Esophagus squamous epithelium (tissue), 5 donors: ENCODE measurements at regions of chr12 and their contacts with region 1.

Region 1: DNA sequence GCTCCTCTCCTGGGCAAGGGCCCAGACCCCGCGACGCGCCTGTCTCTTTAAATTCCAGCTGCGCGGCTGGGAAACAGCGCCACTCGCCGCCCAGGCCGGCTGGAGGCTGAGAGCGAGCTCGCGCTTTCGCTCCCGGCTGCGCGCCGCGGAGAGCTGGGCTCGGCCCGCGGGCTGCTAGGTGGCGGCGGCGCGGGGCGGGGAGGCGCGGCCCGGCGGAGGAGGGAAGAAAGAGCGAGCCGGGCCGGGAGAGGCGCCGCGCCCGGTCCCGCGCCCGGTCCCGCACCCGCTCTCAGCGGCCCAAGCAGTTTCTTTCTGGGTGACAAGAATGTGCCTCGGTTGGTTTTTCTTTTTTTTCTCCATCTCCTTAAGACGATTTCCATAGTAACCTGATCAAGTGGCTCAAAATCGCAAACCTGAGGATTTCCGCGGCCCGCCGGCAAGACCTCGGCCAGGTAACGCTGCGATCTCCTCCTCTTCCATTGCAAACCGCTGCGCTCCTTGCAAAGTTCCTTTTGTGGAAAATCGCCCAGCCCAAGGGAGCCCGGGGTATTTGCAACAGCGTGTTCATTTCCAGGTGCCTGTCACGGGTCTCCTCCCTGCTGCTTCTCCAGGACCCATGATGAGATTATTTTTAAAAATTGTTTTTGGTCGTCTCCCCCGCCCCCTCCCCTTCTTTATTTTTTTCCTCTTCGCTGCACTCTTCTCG is 259.5 kb upstream of the E2F7 start:
- DNase-seq: no peak
- H3K4me3 ChIP-seq: peak overlapping the region; percentile 33 to 74 (median 58)
- H3K27ac ChIP-seq: peak overlapping the region in 2 of 4 donors; percentile 26 to 69
- H3K4me1 ChIP-seq: peaks cover 0 to 39% (median 13%) of the 10 kb centered on the region in 3 donors
- H3K27me3 ChIP-seq: peaks cover 0 to 21% (median 0%) of the 10 kb centered on the region in 4 donors
- CTCF ChIP-seq: peak; percentile 14 to 52 (median 23)
- POLR2A ChIP-seq: no peak

Region 2: DNA sequence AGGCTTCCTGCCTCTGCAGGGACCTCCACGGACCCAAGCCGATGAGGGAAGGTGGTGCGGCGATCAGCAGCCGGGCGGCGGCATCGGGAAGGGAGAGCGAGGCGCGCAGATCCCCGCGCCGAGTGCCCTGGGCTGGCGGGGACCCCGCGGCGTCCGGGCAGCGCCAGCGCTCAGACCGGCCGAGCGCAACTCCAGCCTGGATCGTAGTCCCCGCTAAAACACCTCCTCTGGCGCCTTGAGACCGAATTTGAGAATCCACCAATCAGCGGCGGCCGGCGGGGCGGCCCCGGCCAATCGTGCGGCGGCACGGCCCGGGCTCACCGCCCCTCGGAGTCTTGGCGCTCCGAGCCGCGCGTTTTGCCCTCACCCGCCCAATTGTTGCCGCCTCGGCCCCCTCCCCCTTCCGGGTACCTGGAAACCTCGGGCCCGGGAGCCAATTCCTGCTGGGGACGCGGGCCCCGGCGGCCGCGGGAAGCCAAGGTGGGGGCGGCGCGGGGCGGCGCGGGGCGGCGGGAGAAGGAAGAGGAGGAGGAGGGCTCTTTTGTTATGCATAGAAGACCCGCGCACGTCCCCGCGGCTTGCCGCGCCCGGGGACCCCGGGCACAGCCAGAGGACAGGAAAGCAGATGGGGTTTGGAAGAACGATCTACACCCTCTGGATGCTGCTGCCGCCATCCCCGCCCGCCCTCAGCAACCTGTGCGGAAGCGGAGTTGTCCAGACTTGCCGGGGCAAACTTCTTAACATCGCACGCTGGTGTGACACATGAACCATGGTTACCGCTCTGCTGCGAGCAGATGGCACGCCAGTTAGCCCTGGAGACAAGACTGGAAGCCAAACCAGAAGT is 259.3 kb before region 1 on chr12 and contains the start of gene E2F7:
- intact Hi-C with region 1: loop called (anchors 10 kb)
- DNase-seq: peak; percentile 11
- H3K4me3 ChIP-seq: peak within 1 kb of the TSS; percentile 58 to 89 (median 66)
- H3K27ac ChIP-seq: peak within 1 kb of the TSS; percentile 51 to 85 (median 72)
- H3K4me1 ChIP-seq: peaks cover 0 to 30% (median 8%) of the 10 kb centered on the region in 3 donors
- H3K27me3 ChIP-seq: no peaks in the 10 kb centered on the region
- CTCF ChIP-seq: peak in 1 of 6 experiments; percentile 1
- POLR2A ChIP-seq: peak in 1 of 4 donors; percentile 65
- total RNA-seq, gene E2F7: 1.5 to 7.7 (median 7.1) TPM

Region 3: GRCh38 chr12:77152623-77153193 is 172.2 kb before region 1 on chr12:
- intact Hi-C with region 1: no loop called
- DNase-seq: no peak
- H3K4me3 ChIP-seq: no peak overlapping the region
- H3K27ac ChIP-seq: no peak overlapping the region
- H3K4me1 ChIP-seq: no peaks in the 10 kb centered on the region
- H3K27me3 ChIP-seq: no peaks in the 10 kb centered on the region
- CTCF ChIP-seq: peak in 5 of 6 experiments; percentile 21 to 51 (median 34)
- POLR2A ChIP-seq: no peak